ENCODE measurements at regions of chr1 and their contacts with region 1.

Region 1: GRCh38 chr1:228139944-228140656 is at the start of gene GUK1:
- DNase-seq: peak; percentile 99 to 100 (median 100)
- ATAC-seq: peak; percentile 92 to 97 (median 95)
- H3K4me3 ChIP-seq: peak within 1 kb of the TSS; percentile 84 to 100 (median 93)
- H3K27ac ChIP-seq: peak within 1 kb of the TSS; percentile 87 to 100 (median 99)
- H3K4me1 ChIP-seq: peaks cover 14 to 52% (median 43%) of the 10 kb centered on the region in 12 donors
- H3K27me3 ChIP-seq: no peaks in the 10 kb centered on the region
- CTCF ChIP-seq: peak in 9 of 12 donors; percentile 15 to 53 (median 35)
- POLR2A ChIP-seq: peak; percentile 76 to 98
- total RNA-seq, gene GUK1: 142 to 290 (median 169) TPM

Region 2: GRCh38 chr1:228109073-228109961 is 30.8 kb before region 1 on chr1 and contains the start of gene MRPL55:
- intact Hi-C with region 1: loop called in 2 of 10 experiments (anchors 1 to 2 kb)
- DNase-seq: peak; percentile 96 to 98 (median 97)
- ATAC-seq: peak; percentile 94 to 98 (median 95)
- H3K4me3 ChIP-seq: peak within 1 kb of the TSS; percentile 65 to 99 (median 92)
- H3K27ac ChIP-seq: peak within 1 kb of the TSS; percentile 53 to 95 (median 88)
- H3K4me1 ChIP-seq: peaks cover 5 to 31% (median 20%) of the 10 kb centered on the region in 12 donors
- H3K27me3 ChIP-seq: no peaks in the 10 kb centered on the region
- CTCF ChIP-seq: peak in 5 of 12 donors; percentile 4 to 38 (median 22)
- POLR2A ChIP-seq: peak; percentile 48 to 82
- total RNA-seq, gene MRPL55: 35.5 to 125 (median 51.2) TPM

Region 3: GRCh38 chr1:228154670-228155571 is 14.8 kb after region 1 on chr1:
- intact Hi-C with region 1: loop called in 1 of 10 experiments (anchors 1 kb)
- DNase-seq: peak in 2 of 5 donors; percentile 19 to 48
- ATAC-seq: no peak
- H3K4me3 ChIP-seq: no peak overlapping the region
- H3K27ac ChIP-seq: no peak overlapping the region
- H3K4me1 ChIP-seq: peaks cover 5 to 31% (median 24%) of the 10 kb centered on the region in 12 donors
- H3K27me3 ChIP-seq: peaks cover 0 to 10% (median 0%) of the 10 kb centered on the region in 9 donors
- CTCF ChIP-seq: no peak
- POLR2A ChIP-seq: no peak

Region 4: GRCh38 chr1:228165372-228166169 is 25.5 kb after region 1 on chr1 and contains the start of gene IBA57:
- intact Hi-C with region 1: loop called in 8 of 10 experiments (anchors 1 to 2 kb)
- DNase-seq: peak; percentile 100
- ATAC-seq: peak; percentile 86 to 94 (median 89)
- H3K4me3 ChIP-seq: peak within 1 kb of the TSS; percentile 33 to 88 (median 74)
- H3K27ac ChIP-seq: peak within 1 kb of the TSS; percentile 89 to 100 (median 100)
- H3K4me1 ChIP-seq: peaks cover 0 to 57% (median 43%) of the 10 kb centered on the region in 12 donors
- H3K27me3 ChIP-seq: peaks cover 0 to 10% (median 0%) of the 10 kb centered on the region in 9 donors
- CTCF ChIP-seq: peak; percentile 80 to 97 (median 91)
- POLR2A ChIP-seq: peak; percentile 42 to 87
- total RNA-seq, gene IBA57: 8.7 to 18.6 (median 12.3) TPM

Region 5: GRCh38 chr1:228275739-228276421 is 135.8 kb after region 1 on chr1:
- intact Hi-C with region 1: loop called in 4 of 10 experiments (anchors 5 to 10 kb)
- DNase-seq: peak; percentile 88 to 90 (median 90)
- ATAC-seq: peak; percentile 63 to 85 (median 68)
- H3K4me3 ChIP-seq: peak overlapping the region; percentile 23 to 70 (median 61)
- H3K27ac ChIP-seq: peak overlapping the region in 11 of 12 donors; percentile 30 to 80 (median 65)
- H3K4me1 ChIP-seq: peaks cover 0 to 25% (median 9%) of the 10 kb centered on the region in 12 donors
- H3K27me3 ChIP-seq: no peaks in the 10 kb centered on the region
- CTCF ChIP-seq: no peak
- POLR2A ChIP-seq: no peak

Region 6: GRCh38 chr1:228378090-228378872 is 238.2 kb after region 1 on chr1:
- intact Hi-C with region 1: loop called in 1 of 10 experiments (anchors 10 kb)
- DNase-seq: peak; percentile 60 to 83 (median 74)
- ATAC-seq: peak in 3 of 4 donors; percentile 17 to 42 (median 17)
- H3K4me3 ChIP-seq: peak overlapping the region; percentile 11 to 62 (median 50)
- H3K27ac ChIP-seq: peak overlapping the region in 7 of 12 donors; percentile 2 to 95 (median 47)
- H3K4me1 ChIP-seq: peaks cover 10 to 51% (median 24%) of the 10 kb centered on the region in 12 donors
- H3K27me3 ChIP-seq: peaks cover 0 to 15% (median 0%) of the 10 kb centered on the region in 9 donors
- CTCF ChIP-seq: peak in 11 of 12 donors; percentile 16 to 63 (median 44)
- POLR2A ChIP-seq: no peak

Region 7: GRCh38 chr1:228486596-228487335 is 346.7 kb after region 1 on chr1:
- intact Hi-C with region 1: loop called in 2 of 10 experiments (anchors 10 kb)
- DNase-seq: peak; percentile 74 to 91 (median 83)
- ATAC-seq: peak; percentile 72 to 90 (median 84)
- H3K4me3 ChIP-seq: peak overlapping the region; percentile 66 to 99 (median 74)
- H3K27ac ChIP-seq: peak overlapping the region; percentile 97 to 100 (median 100)
- H3K4me1 ChIP-seq: peaks cover 6 to 46% (median 30%) of the 10 kb centered on the region in 12 donors
- H3K27me3 ChIP-seq: no peaks in the 10 kb centered on the region
- CTCF ChIP-seq: peak in 1 of 12 donors; percentile 6
- POLR2A ChIP-seq: peak in 1 of 2 donors; percentile 23

Measured in heart left ventricle (tissue), 16 donors.